Mammary epithelial cell (primary cell): ENCODE measurements at regions of chr16 and their contacts with region 1.

Region 1: GRCh38 chr16:81403616-81404373 is 40.8 kb upstream of the CMIP start:
- DNase-seq: peak; percentile 69
- H3K4me3 ChIP-seq: peak overlapping the region in 1 of 3 experiments; percentile 36
- H3K27ac ChIP-seq: peak overlapping the region; percentile 45
- H3K4me1 ChIP-seq: peaks cover 40% of the 10 kb centered on the region
- H3K27me3 ChIP-seq: no peaks in the 10 kb centered on the region
- CTCF ChIP-seq: peak; percentile 66 to 93

Region 2: DNA sequence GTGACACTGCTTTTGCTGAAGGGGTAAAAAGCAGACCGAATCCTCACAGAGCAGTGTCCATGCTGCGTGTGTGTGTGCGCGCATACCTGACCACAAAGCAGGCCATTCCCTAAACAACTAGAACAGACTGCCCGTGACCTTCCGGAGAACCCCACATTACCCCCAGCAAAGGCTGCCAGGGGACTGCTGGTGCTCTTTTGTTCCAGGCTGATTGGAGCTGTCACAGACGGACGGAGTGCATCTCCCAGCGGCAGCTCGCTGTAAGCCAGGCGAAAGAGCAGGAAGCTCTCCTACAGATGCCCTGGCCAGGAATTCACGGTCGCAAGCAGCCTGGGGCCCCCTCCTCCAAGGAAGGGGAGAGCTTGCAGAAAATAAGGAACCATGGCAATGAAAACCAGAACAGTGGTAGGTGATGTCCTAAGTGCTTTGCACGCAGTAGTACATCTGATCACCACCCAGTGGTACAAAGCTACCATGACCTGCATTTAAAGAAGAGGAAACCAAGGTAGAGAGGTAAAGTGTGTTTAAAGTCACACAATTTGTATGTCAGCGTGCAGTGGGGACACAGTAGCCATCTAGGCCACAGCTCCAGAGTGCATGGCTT is 1016.4 kb before region 1 on chr16:
- CTCF ChIA-PET with region 1: no interaction called
- dilution Hi-C with region 1: no loop called
- in situ Hi-C with region 1: no loop called
- intact Hi-C with region 1: no loop called
- DNase-seq: no peak
- H3K4me3 ChIP-seq: no peak overlapping the region
- H3K27ac ChIP-seq: no peak overlapping the region
- H3K4me1 ChIP-seq: no peaks in the 10 kb centered on the region
- H3K27me3 ChIP-seq: no peaks in the 10 kb centered on the region
- CTCF ChIP-seq: no peak

Region 3: DNA sequence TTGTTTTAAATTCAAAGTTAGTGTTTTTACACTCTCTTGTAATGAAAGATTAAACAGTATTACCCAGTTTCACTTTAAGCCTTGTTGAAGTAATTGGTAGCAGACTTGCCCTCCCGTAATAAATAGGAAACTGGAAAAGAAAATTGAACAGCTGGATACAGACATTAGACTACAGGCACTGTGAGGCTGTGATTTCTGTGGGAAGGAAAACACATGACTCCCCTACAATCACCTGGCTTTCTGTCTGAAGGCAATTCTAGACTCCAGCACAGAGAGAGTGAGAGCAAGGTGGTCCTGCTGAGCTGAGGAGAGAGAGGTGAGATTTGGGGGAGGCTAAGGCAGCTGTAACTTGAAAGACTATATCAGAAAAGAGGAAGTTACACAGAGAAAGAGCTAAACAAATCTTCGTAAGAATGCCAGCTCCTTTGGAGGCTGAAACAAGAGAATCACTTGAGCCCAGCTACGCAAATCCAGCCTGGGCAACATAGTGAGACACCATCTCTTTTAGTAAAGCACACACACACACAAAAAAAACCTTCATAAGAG is 541.6 kb before region 1 on chr16:
- CTCF ChIA-PET with region 1: no interaction called
- dilution Hi-C with region 1: no loop called
- in situ Hi-C with region 1: no loop called
- intact Hi-C with region 1: no loop called
- DNase-seq: no peak
- H3K4me3 ChIP-seq: no peak overlapping the region
- H3K27ac ChIP-seq: no peak overlapping the region
- H3K4me1 ChIP-seq: no peaks in the 10 kb centered on the region
- H3K27me3 ChIP-seq: no peaks in the 10 kb centered on the region
- CTCF ChIP-seq: no peak

Region 4: DNA sequence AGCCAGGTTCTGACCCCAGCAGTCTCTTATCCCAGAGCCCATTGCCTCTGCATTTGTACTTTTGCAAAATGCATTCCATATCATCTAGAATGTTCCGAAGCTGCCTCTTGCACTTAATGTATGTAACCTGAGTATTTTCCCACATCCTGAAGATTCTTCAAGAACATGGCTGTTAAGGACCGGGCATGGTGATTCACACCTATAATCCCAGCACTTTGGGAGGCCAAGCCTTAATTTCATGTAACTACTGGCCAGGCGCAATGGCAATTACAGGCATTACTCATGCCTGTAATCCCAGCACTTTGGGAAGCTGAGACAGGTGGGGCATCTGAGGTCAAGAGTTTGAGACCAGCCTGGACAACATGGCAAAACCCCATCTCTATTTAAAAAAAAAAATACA is 120.8 kb before region 1 on chr16:
- CTCF ChIA-PET with region 1: no interaction called
- dilution Hi-C with region 1: no loop called
- in situ Hi-C with region 1: no loop called
- intact Hi-C with region 1: no loop called
- DNase-seq: no peak
- H3K4me3 ChIP-seq: no peak overlapping the region
- H3K27ac ChIP-seq: no peak overlapping the region
- H3K4me1 ChIP-seq: no peaks in the 10 kb centered on the region
- H3K27me3 ChIP-seq: no peaks in the 10 kb centered on the region
- CTCF ChIP-seq: no peak

Region 5: DNA sequence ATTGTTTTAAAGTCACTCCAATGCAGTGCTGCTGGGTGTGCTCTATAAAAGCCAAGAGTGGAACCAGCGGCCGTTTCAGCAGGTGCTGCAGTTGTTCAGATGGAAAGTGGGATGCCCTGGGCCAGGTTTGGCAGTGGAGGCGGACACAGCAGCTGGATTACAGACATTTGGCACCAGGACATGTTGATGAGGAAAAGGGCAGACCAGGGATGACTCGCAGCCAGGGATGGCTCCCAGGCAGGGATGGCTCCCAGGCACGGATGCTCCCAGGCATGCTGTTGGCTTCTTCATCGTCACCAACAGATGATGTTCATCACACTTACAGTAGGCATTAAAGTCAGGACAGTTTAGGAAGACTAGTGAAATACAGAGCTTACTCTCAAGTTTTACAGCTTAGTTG is 79.0 kb before region 1 on chr16:
- CTCF ChIA-PET with region 1: no interaction called
- dilution Hi-C with region 1: no loop called
- in situ Hi-C with region 1: no loop called
- intact Hi-C with region 1: no loop called
- DNase-seq: peak; percentile 16
- H3K4me3 ChIP-seq: no peak overlapping the region
- H3K27ac ChIP-seq: no peak overlapping the region
- H3K4me1 ChIP-seq: peaks cover 31% of the 10 kb centered on the region
- H3K27me3 ChIP-seq: no peaks in the 10 kb centered on the region
- CTCF ChIP-seq: no peak

Region 6: GRCh38 chr16:81444448-81445121 is 40.8 kb after region 1 on chr16 and contains the start of gene CMIP:
- CTCF ChIA-PET with region 1: no interaction called
- dilution Hi-C with region 1: no loop called
- in situ Hi-C with region 1: no loop called
- intact Hi-C with region 1: loop called (anchors 1 kb)
- DNase-seq: peak; percentile 74
- H3K4me3 ChIP-seq: peak within 1 kb of the TSS; percentile 69 to 94 (median 72)
- H3K27ac ChIP-seq: peak within 1 kb of the TSS; percentile 93
- H3K4me1 ChIP-seq: peaks cover 26% of the 10 kb centered on the region
- H3K27me3 ChIP-seq: no peaks in the 10 kb centered on the region
- CTCF ChIP-seq: no peak
- total RNA-seq, gene CMIP: 44.5 to 98.5 TPM

Region 7: DNA sequence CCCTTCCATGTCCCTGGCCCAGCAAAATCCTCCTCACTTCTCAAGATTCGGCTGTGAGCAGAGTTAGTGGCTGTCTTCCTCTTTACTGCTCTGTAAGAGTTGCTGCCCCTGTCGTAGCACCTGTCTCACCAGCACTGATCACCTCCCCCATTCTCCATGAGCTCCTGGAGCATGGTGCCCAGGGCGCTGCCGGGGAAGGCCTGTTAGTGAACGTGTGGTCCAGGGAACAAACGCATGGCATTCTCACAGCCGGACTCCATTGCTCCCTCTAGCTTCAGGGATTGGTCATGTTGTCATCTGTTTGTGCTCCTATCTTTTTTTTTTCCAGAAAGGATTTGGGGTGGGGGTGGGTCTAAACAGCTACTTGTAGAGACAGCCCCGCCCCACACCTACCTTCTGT is 182.0 kb after region 1 on chr16:
- CTCF ChIA-PET with region 1: no interaction called
- dilution Hi-C with region 1: no loop called
- in situ Hi-C with region 1: no loop called
- intact Hi-C with region 1: loop called (anchors 2 kb)
- DNase-seq: no peak
- H3K4me3 ChIP-seq: no peak overlapping the region
- H3K27ac ChIP-seq: no peak overlapping the region
- H3K4me1 ChIP-seq: peaks cover 55% of the 10 kb centered on the region
- H3K27me3 ChIP-seq: no peaks in the 10 kb centered on the region
- CTCF ChIP-seq: peak; percentile 14 to 48

Region 8: DNA sequence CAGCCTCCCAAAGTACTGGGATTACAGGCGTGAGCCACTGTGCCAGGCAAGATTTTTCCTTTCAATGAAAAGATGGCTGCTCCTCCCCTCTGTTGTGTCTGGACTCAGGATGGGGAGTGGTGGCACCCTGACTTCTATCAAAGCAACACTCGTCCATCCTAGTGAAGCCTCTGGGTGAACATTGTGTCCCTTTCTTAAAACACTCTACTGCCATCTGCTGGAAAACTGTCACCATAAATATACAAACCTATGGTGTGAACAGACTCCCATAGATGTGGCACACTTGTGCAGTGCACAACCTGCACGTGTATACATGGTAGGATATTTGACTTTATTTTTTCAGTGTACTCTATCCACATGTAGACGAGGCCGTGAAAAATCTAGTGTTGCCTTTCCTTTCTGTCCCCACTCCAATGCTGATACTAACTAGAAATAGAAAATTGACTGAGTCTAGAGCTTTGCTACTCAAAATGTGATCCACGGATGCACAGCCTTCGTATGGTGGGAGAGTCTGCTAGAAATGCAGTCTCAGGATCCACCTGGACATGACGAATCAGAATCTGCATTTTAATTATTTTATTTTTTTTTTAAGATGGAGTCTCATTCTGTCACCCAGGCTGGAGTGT is 319.4 kb after region 1 on chr16:
- CTCF ChIA-PET with region 1: interaction called, 10 read pairs
- dilution Hi-C with region 1: no loop called
- in situ Hi-C with region 1: no loop called
- intact Hi-C with region 1: loop called (anchors 1 kb)
- DNase-seq: peak; percentile 73
- H3K4me3 ChIP-seq: no peak overlapping the region
- H3K27ac ChIP-seq: no peak overlapping the region
- H3K4me1 ChIP-seq: peaks cover 8% of the 10 kb centered on the region
- H3K27me3 ChIP-seq: no peaks in the 10 kb centered on the region
- CTCF ChIP-seq: peak; percentile 50 to 66

Region 9: DNA sequence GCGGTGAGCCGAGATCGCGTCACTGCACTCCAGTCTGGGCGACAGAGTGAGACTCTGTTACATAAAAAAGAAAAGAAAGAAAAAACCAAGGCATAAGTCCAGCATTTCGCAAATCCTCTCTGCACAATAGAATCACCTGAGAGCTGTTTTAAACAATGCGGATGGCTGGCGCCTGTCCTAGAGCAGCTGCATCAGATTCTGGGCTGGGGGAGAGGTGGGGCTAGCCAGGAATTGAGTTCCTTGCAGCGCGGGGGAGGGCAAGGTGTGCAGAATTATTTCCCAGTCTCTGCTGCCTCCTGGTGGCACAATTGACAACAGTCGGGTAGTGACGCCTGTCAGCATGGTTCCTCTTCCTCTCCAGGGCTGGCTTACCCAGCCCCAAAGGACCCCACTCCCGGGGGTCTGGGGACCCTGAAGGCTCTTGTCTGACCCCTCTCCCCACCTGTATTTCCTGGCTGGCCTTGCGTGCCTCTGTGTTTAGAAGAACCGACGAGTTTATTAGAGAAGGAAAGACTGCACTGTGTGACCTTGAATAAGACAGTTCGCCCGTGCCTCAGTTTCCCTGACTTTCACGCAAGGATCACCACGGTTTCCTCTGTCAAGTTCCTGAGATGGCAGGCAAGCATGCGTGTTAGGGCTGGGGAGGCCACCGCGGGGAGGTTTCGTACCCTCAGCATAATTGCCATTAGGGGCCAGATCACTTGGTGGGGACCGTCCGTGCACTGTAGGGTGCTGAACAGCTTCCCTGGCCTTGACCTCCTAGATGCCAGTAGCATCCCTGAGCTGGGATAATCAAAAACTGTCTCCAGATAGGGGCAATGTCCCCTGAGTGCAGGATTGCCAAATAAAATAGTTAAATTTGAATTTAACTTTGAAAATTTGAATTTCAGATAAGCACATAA is 334.3 kb after region 1 on chr16:
- CTCF ChIA-PET with region 1: no interaction called
- dilution Hi-C with region 1: no loop called
- in situ Hi-C with region 1: no loop called
- intact Hi-C with region 1: loop called (anchors 1 kb)
- DNase-seq: peak; percentile 88
- H3K4me3 ChIP-seq: peak overlapping the region in 1 of 3 experiments; percentile 18
- H3K27ac ChIP-seq: no peak overlapping the region
- H3K4me1 ChIP-seq: peaks cover 3% of the 10 kb centered on the region
- H3K27me3 ChIP-seq: no peaks in the 10 kb centered on the region
- CTCF ChIP-seq: peak; percentile 81 to 83